CD14-positive monocyte (primary cell): ENCODE measurements at regions of chr14 and their contacts with region 1.

Region 1: DNA sequence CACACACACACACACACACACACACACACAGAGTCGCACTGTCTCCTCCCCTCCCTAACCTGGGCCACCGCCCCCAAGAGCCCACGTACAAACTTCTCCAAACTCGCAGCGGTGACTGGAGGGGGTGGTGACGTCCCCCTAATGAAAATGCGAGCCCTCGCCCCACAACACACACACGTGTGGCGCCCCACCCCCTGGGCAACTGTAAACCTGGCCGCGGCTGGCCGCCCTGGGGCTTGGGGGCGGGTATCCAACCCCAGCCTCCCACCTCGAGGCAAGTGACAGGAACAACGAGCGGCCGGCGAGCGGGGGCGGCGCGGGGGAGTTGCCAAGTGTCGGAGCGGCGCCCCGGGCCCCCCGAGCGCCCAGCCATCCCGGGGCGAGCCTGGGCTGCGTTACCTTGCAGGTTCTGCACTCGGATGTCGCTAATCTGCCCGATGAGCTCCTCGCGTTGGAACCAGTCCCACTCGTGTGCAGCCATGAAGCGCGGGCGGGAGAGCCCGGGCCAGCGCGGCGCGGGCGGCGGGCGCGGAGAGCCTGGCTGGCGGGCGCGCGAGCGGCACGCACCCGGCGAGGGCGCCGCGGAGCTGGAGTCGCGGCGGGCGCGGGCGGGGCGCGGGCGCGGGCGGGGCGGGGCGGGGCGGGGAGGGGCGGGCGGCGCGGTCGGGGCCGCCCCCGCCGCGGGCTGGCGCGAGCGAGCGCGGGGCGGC is at the start of gene CLMN:
- DNase-seq: peak; percentile 40 to 56 (median 52)
- H3K4me3 ChIP-seq: peak within 1 kb of the TSS; percentile 69 to 84 (median 75)
- H3K4me3 Mint-ChIP-seq: peak within 1 kb of the TSS; percentile 90 to 95
- H3K27ac ChIP-seq: peak within 1 kb of the TSS; percentile 58 to 81
- H3K27ac Mint-ChIP-seq: peak within 1 kb of the TSS; percentile 85 to 96 (median 89)
- H3K4me1 ChIP-seq: peaks cover 77 to 81% of the 10 kb centered on the region in 2 donors
- H3K4me1 Mint-ChIP-seq: peaks cover 83% of the 10 kb centered on the region
- H3K27me3 ChIP-seq: no peaks in the 10 kb centered on the region
- H3K27me3 Mint-ChIP-seq: peaks cover 2 to 21% (median 7%) of the 10 kb centered on the region in 3 donors
- CTCF ChIP-seq: no peak
- polyA plus RNA-seq, gene CLMN: 22.0 to 33.7 (median 23.2) TPM

Region 2: DNA sequence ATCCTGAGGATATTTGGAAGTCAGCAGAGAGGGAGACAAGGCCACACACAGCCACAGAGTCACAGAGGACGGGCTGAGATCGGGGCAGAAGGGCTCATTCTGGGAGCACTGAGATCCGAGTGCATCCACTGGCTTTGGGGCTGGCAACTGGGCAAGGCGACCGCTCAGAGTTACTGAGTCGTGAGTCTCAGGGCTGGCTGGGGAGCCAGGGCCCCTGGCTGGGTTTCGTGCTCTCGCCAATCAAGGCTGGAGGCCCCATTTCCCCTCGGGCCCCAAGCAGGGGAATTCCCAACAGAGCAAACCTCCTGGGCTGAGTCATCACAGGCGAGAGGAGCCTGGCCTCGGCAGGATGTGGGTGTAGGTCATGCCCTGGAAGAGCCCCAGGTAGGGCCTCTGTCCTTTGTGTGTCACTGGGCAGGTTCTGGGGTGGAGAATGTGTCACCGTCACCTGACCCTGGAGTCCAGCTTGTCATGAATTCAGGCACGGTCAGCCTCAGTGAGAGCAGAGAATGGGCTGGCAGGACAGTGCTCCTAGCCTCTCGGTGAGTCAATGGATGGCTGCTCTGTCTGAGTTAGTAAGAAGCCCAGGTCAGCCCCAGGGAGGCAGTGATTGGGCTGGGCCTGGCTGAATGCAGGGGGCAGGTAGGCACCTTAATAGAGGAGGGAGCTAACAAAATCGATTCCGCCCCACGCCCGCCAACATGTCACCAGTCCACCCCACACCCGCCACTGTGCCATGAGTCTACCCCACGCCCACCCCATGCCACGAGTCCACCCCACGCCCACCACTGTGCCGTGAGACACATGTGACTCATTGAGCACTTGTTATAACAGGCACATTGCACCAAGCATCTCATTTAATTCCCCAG is 1360.0 kb before region 1 on chr14:
- intact Hi-C with region 1: loop called in 1 of 2 experiments (anchors 5 kb)
- DNase-seq: peak; percentile 98 to 100 (median 99)
- H3K4me3 ChIP-seq: no peak overlapping the region
- H3K4me3 Mint-ChIP-seq: peak overlapping the region; percentile 52 to 80
- H3K27ac ChIP-seq: peak overlapping the region; percentile 71 to 91
- H3K27ac Mint-ChIP-seq: peak overlapping the region; percentile 93 to 99 (median 97)
- H3K4me1 ChIP-seq: peaks cover 77 to 85% of the 10 kb centered on the region in 2 donors
- H3K4me1 Mint-ChIP-seq: peaks cover 90% of the 10 kb centered on the region
- H3K27me3 ChIP-seq: no peaks in the 10 kb centered on the region
- H3K27me3 Mint-ChIP-seq: peaks cover 1 to 8% (median 5%) of the 10 kb centered on the region in 3 donors
- CTCF ChIP-seq: no peak

Region 3: GRCh38 chr14:95163132-95163531 is 156.3 kb before region 1 on chr14:
- intact Hi-C with region 1: loop called in 1 of 2 experiments (anchors 5 kb)
- DNase-seq: peak; percentile 18 to 62 (median 51)
- H3K4me3 ChIP-seq: peak overlapping the region in 1 of 3 experiments; percentile 18
- H3K4me3 Mint-ChIP-seq: peak overlapping the region in 1 of 2 donors; percentile 62
- H3K27ac ChIP-seq: peak overlapping the region in 1 of 2 donors; percentile 53
- H3K27ac Mint-ChIP-seq: peak overlapping the region; percentile 65 to 90 (median 84)
- H3K4me1 ChIP-seq: peaks cover 23 to 28% of the 10 kb centered on the region in 2 donors
- H3K4me1 Mint-ChIP-seq: peaks cover 31% of the 10 kb centered on the region
- H3K27me3 ChIP-seq: no peaks in the 10 kb centered on the region
- H3K27me3 Mint-ChIP-seq: peaks cover 0 to 3% (median 0%) of the 10 kb centered on the region in 3 donors
- CTCF ChIP-seq: no peak

Region 4: DNA sequence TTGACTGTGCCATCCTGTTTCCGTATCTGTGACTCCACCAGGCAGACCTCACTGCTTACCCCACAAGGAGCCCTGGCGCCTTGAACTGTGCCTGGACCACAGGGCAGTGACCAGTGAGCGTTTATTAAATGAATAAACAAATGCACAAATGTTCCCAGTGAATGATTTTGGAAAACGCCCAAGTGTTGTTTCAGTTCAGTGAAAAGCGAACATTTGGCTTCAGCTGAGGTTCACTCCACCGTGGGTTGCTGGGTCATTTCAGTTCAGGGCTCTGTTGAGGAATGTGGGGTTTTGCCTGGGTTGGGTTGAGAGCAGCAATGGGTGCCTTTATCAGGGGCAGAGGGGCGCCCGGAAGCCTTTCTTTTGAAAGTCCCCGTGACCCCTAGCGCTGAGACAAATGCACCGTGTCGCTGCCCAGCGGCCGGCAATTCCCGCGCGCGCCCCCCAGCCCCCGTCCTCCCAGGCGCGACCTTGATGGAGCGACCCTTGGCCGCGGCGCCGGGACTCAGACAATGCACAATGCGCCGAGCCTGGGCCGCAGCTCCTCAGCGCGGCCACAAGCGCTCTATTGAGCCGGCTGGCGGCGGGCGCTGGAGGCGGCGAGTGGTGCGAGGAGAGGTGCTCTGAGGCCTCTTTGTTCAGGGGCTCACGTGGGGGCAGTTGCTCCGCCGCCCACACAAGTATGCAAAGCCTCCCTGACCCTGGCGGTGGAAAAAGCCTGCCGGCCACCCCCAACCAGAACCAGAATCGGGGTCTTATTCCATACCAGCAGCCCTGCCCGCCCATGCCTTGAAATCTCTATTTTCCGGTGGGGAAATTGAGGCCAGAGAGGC is 40.7 kb after region 1 on chr14:
- intact Hi-C with region 1: loop called in 1 of 2 experiments (anchors 5 kb)
- DNase-seq: no peak
- H3K4me3 ChIP-seq: no peak overlapping the region
- H3K4me3 Mint-ChIP-seq: peak overlapping the region in 1 of 2 donors; percentile 77
- H3K27ac ChIP-seq: no peak overlapping the region
- H3K27ac Mint-ChIP-seq: no peak overlapping the region
- H3K4me1 ChIP-seq: no peaks in the 10 kb centered on the region
- H3K4me1 Mint-ChIP-seq: peaks cover 5% of the 10 kb centered on the region
- H3K27me3 ChIP-seq: peaks cover 23 to 32% of the 10 kb centered on the region in 2 donors
- H3K27me3 Mint-ChIP-seq: peaks cover 36 to 53% (median 40%) of the 10 kb centered on the region in 3 donors
- CTCF ChIP-seq: no peak

Region 5: DNA sequence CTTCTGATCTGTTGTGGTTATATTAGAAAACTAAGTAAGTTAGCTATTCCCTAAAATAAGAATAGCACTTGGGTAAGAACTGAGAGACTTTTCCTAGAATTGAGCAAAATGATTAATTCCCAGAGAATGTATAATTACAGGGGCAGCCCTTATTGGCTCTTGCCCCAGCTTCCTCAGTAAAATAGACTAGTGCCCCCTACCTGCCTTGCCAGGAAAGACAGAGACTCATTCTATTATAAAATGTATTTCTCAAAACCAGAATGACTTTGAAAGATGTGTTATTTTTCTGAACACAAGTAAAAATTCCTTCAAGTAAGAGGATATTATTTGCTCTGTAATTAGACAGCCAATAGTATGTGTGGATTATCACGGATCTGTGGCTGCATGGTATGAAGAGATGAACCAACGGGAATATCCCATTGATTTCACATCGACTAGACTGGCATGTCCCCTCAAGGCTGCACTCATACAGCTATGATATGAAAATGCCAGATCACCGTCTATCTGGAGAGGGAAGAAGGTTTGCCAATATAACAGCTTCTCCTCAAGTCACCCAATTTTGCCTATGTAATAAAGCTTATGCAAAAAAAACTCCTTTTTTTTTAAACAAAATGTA is 208.0 kb after region 1 on chr14:
- intact Hi-C with region 1: loop called in 1 of 2 experiments (anchors 2 kb)
- DNase-seq: peak in 2 of 3 donors; percentile 53 to 61
- H3K4me3 ChIP-seq: no peak overlapping the region
- H3K4me3 Mint-ChIP-seq: no peak overlapping the region
- H3K27ac ChIP-seq: peak overlapping the region in 1 of 2 donors; percentile 6
- H3K27ac Mint-ChIP-seq: peak overlapping the region in 4 of 7 donors; percentile 8 to 71 (median 50)
- H3K4me1 ChIP-seq: peaks cover 38 to 55% of the 10 kb centered on the region in 2 donors
- H3K4me1 Mint-ChIP-seq: peaks cover 57% of the 10 kb centered on the region
- H3K27me3 ChIP-seq: no peaks in the 10 kb centered on the region
- H3K27me3 Mint-ChIP-seq: peaks cover 0 to 3% (median 0%) of the 10 kb centered on the region in 3 donors
- CTCF ChIP-seq: peak; percentile 87